ENCODE measurements at regions of chr3 and their contacts with region 1.

Region 1: DNA sequence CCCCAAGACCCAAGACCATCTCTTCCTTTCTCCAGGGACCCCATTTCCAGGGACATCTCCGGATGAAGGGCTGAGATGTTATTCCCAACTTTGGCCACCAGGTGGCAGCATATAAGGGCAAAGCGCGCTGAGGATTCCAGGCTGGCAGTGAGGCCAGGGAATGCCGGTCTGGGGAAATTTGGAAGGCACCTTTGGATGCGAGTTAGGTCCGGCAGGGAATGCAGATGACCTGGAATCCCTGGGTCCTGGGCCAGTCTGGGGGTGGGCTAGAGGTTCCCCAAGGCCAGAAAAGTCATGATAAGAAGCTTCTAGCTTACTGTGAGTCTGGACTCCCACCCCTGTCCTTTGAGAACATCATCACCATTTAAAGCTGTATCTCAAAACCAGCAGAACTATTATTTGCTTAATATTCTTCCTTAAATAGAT is 1.6 kb upstream of the CHST13 start:
- DNase-seq: peak in 9 of 10 donors; percentile 36 to 77 (median 68)
- H3K4me3 ChIP-seq: no peak overlapping the region
- H3K27ac ChIP-seq: peak overlapping the region in 10 of 59 donors; percentile 12 to 85 (median 58)
- H3K27me3 ChIP-seq: peaks cover 0 to 17% (median 0%) of the 10 kb centered on the region in 45 donors
- CTCF ChIP-seq: peak; percentile 82 to 97 (median 92)

Region 2: DNA sequence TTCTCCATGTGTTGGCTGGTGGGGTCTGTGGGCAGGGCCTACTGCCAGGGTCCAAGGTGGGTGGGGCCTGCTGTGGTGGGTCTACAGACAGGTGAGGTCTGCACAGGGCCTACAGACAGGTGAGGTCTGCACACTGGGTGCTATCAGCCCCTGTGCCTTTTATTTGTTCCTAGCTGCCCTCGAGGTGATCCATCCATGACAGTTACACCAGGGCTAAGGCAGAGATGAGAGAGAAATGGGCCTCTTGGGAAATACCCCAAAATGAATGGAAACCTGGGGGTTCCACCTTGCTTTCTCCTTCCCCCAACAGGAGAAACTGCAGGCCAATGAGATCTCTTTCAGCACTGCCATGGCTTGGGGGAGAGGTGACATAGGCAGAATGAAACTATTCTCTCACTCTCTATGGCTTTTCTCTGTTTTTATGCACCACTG is 91.3 kb before region 1 on chr3:
- intact Hi-C with region 1: no loop called
- DNase-seq: peak in 1 of 10 donors; percentile 13
- H3K4me3 ChIP-seq: no peak overlapping the region
- H3K27ac ChIP-seq: no peak overlapping the region
- H3K27me3 ChIP-seq: no peaks in the 10 kb centered on the region
- CTCF ChIP-seq: no peak

Region 3: DNA sequence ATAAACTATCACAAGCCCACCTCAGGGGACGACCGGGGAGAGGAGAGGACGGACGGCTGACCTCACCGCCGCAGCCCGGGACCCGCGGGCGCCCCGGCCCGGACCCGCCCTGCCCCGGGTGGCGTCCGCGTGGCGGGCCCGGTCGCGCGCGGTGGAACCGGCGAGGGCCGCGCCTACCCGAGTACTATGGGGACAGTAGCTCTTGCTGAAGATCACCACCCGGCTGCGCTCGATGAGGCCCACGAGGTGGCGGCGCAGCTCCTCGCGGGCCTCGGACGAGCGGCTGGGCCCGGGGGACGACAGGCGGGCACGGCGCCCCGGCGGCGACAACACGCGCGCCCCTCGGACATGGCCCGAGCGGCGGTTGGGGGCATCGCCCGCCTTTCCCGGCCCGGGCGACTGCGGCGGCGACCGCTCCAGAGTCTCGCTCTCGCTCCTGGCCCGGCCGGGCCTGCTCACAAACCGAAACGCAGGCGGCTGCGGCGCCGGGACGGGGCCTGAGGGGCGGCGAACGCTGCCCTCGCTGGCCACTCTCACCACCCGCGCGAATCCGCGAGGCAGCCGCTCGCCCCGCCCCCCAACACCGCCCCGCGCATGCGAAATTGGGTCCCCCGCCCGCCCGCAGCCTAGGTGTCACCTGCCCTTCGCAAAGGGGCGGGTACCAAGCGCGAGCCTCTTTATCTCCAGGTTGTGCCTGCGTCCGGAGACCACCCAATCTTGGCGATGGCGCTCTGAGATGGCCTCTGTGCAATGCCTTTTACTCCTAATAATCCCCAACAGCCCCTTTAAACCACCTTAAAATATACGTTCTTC is 132.4 kb after region 1 on chr3 and contains the start of gene TXNRD3:
- intact Hi-C with region 1: loop called in 1 of 2 experiments (anchors 10 kb)
- DNase-seq: peak in 9 of 10 donors; percentile 57 to 87 (median 74)
- H3K4me3 ChIP-seq: peak within 1 kb of the TSS; percentile 50 to 92 (median 75)
- H3K27ac ChIP-seq: peak within 1 kb of the TSS in 35 of 59 donors; percentile 6 to 87 (median 64)
- H3K27me3 ChIP-seq: no peaks in the 10 kb centered on the region
- CTCF ChIP-seq: peak in 20 of 56 donors; percentile 11 to 52 (median 26)
- total RNA-seq, gene TXNRD3: 4.0 to 17.3 (median 8.9) TPM

Measured in dorsolateral prefrontal cortex (tissue), 120 donors.